Activated naive CD4-positive, alpha-beta T cell treated with anti-CD3 and anti-CD28 coated beads for 36 hours (primary cell): ENCODE measurements at regions of chr19 and their contacts with region 1.

Region 1: DNA sequence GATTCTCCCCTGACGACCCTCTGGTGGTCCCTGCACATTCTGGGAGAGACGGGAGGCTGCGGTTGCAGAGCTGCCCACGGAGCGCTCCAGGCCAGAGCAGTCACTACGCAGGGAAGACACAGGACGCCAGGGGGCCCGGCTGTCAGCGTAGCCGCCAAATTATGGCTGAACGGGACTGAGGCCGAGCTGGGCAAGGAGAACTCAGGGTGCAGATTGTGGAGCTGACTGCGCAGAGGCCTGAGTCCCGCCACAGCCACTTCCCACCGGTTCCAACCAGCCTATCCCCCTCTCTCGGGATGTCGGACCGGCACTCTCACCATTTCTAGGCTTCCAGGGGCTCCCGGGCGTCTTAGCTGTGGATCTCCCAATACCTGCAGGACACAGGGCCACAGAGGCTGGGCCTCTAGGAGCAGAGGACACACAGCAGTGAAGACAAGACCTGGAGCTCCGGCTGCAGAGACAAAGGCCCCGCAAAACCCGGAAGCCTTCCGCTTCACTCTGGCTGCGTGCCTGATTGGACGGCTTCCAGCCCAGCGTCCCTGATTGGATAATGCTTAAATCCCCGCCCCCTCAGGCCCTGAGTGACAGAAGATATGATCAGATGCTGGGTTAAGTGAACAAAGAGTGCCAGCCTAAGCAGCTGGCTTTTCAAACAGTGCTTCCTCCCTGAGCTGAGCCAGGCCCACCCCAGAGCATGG is at the start of gene ZNF737:
- DNase-seq: peak; percentile 96
- H3K4me3 Mint-ChIP-seq: peak within 1 kb of the TSS; percentile 94
- H3K27ac Mint-ChIP-seq: peak within 1 kb of the TSS; percentile 96
- H3K4me1 Mint-ChIP-seq: peaks cover 14% of the 10 kb centered on the region
- H3K27me3 Mint-ChIP-seq: no peaks in the 10 kb centered on the region
- total RNA-seq, gene ZNF737: 7.9 to 9.4 TPM

Region 2: DNA sequence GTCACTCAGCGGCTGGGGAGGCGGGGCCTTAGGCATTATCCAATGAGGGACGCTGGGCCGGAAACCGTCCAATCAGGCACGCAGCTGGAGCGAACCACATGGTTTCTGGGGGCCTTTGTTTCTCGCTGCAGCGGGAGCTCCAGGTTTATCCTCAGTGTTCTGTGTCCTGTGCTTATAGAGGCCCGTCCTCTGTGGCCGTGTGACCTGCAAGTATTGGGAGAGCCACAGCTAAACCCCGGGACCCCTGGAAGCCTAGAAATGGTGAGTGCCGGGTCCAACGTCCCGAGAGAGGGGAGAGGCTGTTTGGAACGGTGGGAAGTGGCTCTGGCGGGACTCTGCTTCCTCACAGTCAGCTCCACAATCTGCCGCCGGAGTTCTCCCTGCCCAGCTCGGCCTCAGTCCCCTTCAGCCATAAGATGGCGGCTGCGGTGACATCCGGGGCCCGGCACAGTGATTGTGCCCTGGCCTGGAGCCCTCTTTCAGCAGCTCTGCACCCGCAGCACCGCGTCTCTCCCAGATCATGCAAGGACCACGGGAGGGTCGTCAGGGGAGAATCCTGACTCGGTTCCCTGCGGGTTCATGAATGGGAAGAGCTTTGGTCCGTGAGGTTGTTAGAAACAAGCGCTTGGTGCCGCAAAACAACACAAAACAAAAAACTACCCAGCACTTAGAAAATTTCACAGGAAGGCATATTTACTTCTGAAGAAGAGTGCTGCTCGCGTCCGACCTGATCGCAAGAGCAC is 699.6 kb before region 1 on chr19 and contains the start of gene ZNF253:
- CTCF ChIA-PET with region 1: no interaction called
- intact Hi-C with region 1: loop called (anchors 5 kb)
- DNase-seq: peak; percentile 99
- H3K4me3 Mint-ChIP-seq: peak within 1 kb of the TSS; percentile 100
- H3K27ac Mint-ChIP-seq: peak within 1 kb of the TSS; percentile 99
- H3K4me1 Mint-ChIP-seq: peaks cover 26% of the 10 kb centered on the region
- H3K27me3 Mint-ChIP-seq: no peaks in the 10 kb centered on the region
- total RNA-seq, gene ZNF253: 6.1 to 9.6 TPM

Region 3: GRCh38 chr19:20039203-20039723 is 526.2 kb before region 1 on chr19 and contains the start of gene ZNF682:
- CTCF ChIA-PET with region 1: no interaction called
- intact Hi-C with region 1: loop called (anchors 5 kb)
- DNase-seq: peak; percentile 98
- H3K4me3 Mint-ChIP-seq: peak within 1 kb of the TSS; percentile 94
- H3K27ac Mint-ChIP-seq: peak within 1 kb of the TSS; percentile 90
- H3K4me1 Mint-ChIP-seq: peaks cover 15% of the 10 kb centered on the region
- H3K27me3 Mint-ChIP-seq: no peaks in the 10 kb centered on the region
- total RNA-seq, gene ZNF682: 8.1 to 8.9 TPM

Region 4: GRCh38 chr19:20482721-20483120 is 82.7 kb before region 1 on chr19:
- CTCF ChIA-PET with region 1: no interaction called
- intact Hi-C with region 1: no loop called
- DNase-seq: no peak
- H3K4me3 Mint-ChIP-seq: no peak overlapping the region
- H3K27ac Mint-ChIP-seq: no peak overlapping the region
- H3K4me1 Mint-ChIP-seq: peaks cover 14% of the 10 kb centered on the region
- H3K27me3 Mint-ChIP-seq: no peaks in the 10 kb centered on the region

Region 5: DNA sequence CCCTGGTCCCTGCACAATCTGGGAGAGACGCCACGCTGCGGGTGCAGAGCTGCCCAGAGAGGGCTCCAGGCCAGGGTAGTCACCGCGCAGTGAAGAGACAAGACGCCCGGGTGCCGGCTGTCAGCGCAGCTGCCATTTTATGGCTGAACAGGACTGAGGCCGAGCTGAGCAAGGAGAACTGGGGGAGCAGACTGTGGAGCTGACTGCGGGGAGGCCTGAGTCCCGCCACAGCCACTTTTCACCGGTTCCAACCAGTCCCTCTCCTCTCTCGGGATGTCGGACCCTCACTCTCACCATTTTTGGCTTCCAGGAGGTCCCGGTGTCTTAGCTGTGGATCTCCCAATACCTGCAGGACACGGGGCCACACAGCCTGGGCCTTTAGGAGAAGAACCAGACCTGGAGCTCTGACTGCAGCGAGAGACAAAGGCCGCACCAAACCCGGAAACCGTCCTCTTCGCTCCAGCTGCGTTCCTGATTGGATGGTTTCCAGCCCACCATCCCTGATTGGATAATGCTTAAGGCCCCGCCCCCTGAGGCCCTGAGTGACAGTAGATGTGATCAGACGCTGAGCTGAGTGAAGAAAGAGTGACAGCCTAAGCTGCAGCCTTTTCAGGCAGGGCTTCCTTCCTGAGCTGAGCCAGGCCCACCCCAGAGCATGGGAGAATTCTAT is 95.8 kb after region 1 on chr19 and contains the start of gene ZNF626:
- CTCF ChIA-PET with region 1: interaction called, 3 read pairs
- intact Hi-C with region 1: loop called (anchors 1 kb)
- DNase-seq: peak; percentile 97
- H3K4me3 Mint-ChIP-seq: peak within 1 kb of the TSS; percentile 93
- H3K27ac Mint-ChIP-seq: peak within 1 kb of the TSS; percentile 91
- H3K4me1 Mint-ChIP-seq: peaks cover 20% of the 10 kb centered on the region
- H3K27me3 Mint-ChIP-seq: no peaks in the 10 kb centered on the region
- total RNA-seq, gene ZNF626: 8.2 to 9.8 TPM

Region 6: DNA sequence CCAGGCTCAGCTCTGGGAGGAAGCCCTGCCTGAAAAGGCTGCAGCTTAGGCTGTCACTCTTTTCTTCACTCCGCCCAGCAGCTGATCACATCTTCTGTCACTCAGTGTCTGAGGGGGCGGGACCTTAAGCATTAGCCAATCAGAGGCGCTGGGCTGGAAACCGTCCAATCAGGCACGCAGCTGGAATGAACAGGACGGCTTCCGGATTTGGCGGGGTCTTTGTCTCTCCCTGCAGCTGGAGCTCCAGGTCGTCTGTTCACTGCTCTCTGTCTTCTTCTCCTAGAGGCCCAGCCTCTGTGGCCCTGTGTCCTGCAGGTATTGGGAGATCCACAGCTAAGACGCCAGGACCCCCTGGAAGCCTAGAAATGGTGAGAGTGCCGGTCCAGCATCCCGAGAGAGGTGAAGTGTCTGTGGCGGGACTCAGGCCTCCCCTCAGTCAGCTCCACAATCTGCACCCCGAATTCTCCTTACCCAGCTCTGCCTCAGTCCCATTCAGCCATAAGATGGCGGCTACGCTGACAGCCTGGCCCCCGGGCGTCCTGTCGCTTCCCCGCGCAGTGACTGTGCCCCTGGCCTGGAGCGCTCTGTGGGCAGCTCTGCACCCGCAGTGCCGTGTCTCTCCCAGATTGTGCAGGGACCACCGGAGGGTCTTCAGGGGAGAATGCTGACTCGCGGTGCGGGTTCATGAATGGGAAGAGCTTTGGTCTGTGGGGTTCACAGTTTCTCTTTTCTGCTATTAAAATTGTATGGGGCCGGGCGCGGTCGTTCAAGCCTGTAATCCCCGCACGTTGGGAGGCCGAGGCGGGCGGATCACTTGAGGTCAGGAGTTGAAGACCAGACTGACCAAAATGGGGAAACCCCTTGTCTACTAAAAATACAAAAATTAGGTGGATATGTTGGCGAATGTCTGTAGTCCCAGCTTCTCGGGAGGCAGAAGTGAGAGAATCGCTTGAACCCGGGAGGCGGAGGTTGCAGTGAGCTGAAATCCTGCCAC is 210.9 kb after region 1 on chr19 and contains the start of gene ZNF66:
- CTCF ChIA-PET with region 1: no interaction called
- intact Hi-C with region 1: loop called (anchors 1 kb)
- DNase-seq: peak; percentile 98
- H3K4me3 Mint-ChIP-seq: peak within 1 kb of the TSS; percentile 100
- H3K27ac Mint-ChIP-seq: peak within 1 kb of the TSS; percentile 95
- H3K4me1 Mint-ChIP-seq: peaks cover 18% of the 10 kb centered on the region
- H3K27me3 Mint-ChIP-seq: no peaks in the 10 kb centered on the region
- total RNA-seq, gene ZNF66: 3.9 to 4.9 TPM

Region 7: GRCh38 chr19:20999731-21000352 is 434.4 kb after region 1 on chr19:
- CTCF ChIA-PET with region 1: no interaction called
- intact Hi-C with region 1: loop called (anchors 1 kb)
- DNase-seq: peak; percentile 96
- H3K4me3 Mint-ChIP-seq: peak overlapping the region; percentile 97
- H3K27ac Mint-ChIP-seq: peak overlapping the region; percentile 87
- H3K4me1 Mint-ChIP-seq: peaks cover 3% of the 10 kb centered on the region
- H3K27me3 Mint-ChIP-seq: no peaks in the 10 kb centered on the region

Region 8: GRCh38 chr19:21328885-21329605 is 763.6 kb after region 1 on chr19 and contains the start of gene ZNF708:
- CTCF ChIA-PET with region 1: no interaction called
- intact Hi-C with region 1: loop called (anchors 1 kb)
- DNase-seq: peak; percentile 90
- H3K4me3 Mint-ChIP-seq: peak within 1 kb of the TSS; percentile 98
- H3K27ac Mint-ChIP-seq: peak within 1 kb of the TSS; percentile 98
- H3K4me1 Mint-ChIP-seq: peaks cover 33% of the 10 kb centered on the region
- H3K27me3 Mint-ChIP-seq: no peaks in the 10 kb centered on the region
- total RNA-seq, gene ZNF708: 7.8 to 10.9 TPM